Body of pancreas (tissue), 4 donors: ENCODE measurements at regions of chr6 and their contacts with region 1.

Region 1: GRCh38 chr6:12890171-12890790 is 173.7 kb downstream of the PHACTR1 start:
- DNase-seq: peak in 1 of 4 donors; percentile 38
- ATAC-seq: no peak
- H3K4me3 ChIP-seq: no peak overlapping the region
- H3K27ac ChIP-seq: no peak overlapping the region
- H3K4me1 ChIP-seq: peaks cover 11% of the 10 kb centered on the region
- H3K27me3 ChIP-seq: no peaks in the 10 kb centered on the region
- CTCF ChIP-seq: peak in 2 of 7 experiments; percentile 14 to 15
- POLR2A ChIP-seq: no peak

Region 2: GRCh38 chr6:12637960-12638641 is 252.2 kb before region 1 on chr6:
- intact Hi-C with region 1: loop called (anchors 5 kb)
- DNase-seq: peak; percentile 54 to 69 (median 59)
- ATAC-seq: peak; percentile 48
- H3K4me3 ChIP-seq: no peak overlapping the region
- H3K27ac ChIP-seq: no peak overlapping the region
- H3K4me1 ChIP-seq: no peaks in the 10 kb centered on the region
- H3K27me3 ChIP-seq: no peaks in the 10 kb centered on the region
- CTCF ChIP-seq: peak; percentile 36 to 69 (median 61)
- POLR2A ChIP-seq: no peak